Activated CD4-positive, alpha-beta T cell treated with anti-CD3 and anti-CD28 coated beads, Interleukin-2, amount 10 ng/mL, durations not matched to agents 7 days and 5 days (primary cell): ENCODE measurements at regions of chr1 and their contacts with region 1.

Region 1: GRCh38 chr1:153946622-153947241 is at the start of gene DENND4B:
- DNase-seq: peak; percentile 70
- H3K4me3 Mint-ChIP-seq: peak within 1 kb of the TSS; percentile 95
- H3K27ac Mint-ChIP-seq: peak within 1 kb of the TSS; percentile 97
- H3K4me1 Mint-ChIP-seq: peaks cover 29% of the 10 kb centered on the region
- H3K27me3 Mint-ChIP-seq: no peaks in the 10 kb centered on the region
- total RNA-seq, gene DENND4B: 165 to 180 TPM

Region 2: GRCh38 chr1:153805042-153805745 is 141.5 kb before region 1 on chr1:
- CTCF ChIA-PET with region 1: interaction called, 12 read pairs
- POLR2A ChIA-PET with region 1: no interaction called
- DNase-seq: peak; percentile 83
- H3K4me3 Mint-ChIP-seq: peak overlapping the region; percentile 14
- H3K27ac Mint-ChIP-seq: peak overlapping the region; percentile 77
- H3K4me1 Mint-ChIP-seq: peaks cover 39% of the 10 kb centered on the region
- H3K27me3 Mint-ChIP-seq: no peaks in the 10 kb centered on the region

Region 3: DNA sequence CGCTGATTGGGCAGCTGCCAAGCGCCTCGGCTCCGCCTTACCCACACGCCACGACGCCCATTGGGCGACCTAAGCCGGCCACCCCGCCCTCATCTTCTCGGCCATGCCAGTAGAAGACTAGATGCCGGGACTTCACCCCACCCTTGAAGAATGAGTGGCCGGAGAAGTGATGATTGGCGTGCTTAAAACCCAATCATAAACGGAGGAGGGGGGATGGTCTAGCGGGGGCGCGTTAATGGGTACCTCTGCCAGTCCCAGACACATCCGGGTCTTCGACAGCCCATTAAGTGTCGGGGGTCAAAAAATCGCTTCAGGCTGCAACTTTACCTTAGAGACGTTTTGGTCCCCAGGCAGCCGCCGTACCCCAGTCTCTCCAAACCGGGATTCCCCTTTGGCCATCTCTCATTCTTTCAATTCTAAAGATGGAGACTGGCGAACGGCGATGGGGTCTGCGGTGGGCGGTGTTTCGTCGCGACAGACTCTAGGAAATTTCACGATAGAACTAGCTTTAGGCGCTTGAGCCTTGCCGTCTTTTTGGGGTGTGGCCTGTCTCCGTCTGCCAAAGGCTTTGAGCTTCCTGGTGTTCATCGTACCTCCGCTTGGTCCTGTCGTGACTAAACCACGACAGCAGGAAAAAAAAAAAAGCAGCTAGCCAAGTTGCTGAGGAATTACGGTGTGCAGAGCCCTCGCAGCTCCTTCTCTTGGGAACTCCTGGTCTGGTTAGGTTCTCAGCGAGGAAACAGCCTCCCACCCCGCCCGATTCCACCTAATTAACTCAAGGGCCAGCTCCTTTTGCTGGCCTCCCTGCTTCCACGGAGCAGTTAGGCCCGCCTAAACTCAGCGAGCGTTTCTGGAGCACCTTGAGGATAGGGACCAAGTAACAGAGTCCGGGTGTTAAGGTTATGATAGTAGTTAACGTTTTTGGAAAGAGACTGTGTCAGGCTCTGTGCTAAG is 23.5 kb before region 1 on chr1 and contains the start of gene GATAD2B:
- CTCF ChIA-PET with region 1: interaction called, 21 read pairs
- POLR2A ChIA-PET with region 1: interaction called, 3 read pairs
- DNase-seq: peak; percentile 100
- H3K4me3 Mint-ChIP-seq: peak within 1 kb of the TSS; percentile 95
- H3K27ac Mint-ChIP-seq: peak within 1 kb of the TSS; percentile 95
- H3K4me1 Mint-ChIP-seq: peaks cover 42% of the 10 kb centered on the region
- H3K27me3 Mint-ChIP-seq: no peaks in the 10 kb centered on the region
- total RNA-seq, gene GATAD2B: 73.4 to 75.4 TPM

Region 4: GRCh38 chr1:153928791-153929341 is 17.9 kb before region 1 on chr1:
- CTCF ChIA-PET with region 1: interaction called, 21 read pairs
- POLR2A ChIA-PET with region 1: interaction called, 3 read pairs
- DNase-seq: no peak
- H3K4me3 Mint-ChIP-seq: no peak overlapping the region
- H3K27ac Mint-ChIP-seq: peak overlapping the region; percentile 60
- H3K4me1 Mint-ChIP-seq: peaks cover 17% of the 10 kb centered on the region
- H3K27me3 Mint-ChIP-seq: no peaks in the 10 kb centered on the region

Region 5: GRCh38 chr1:153958111-153958960 is 11.6 kb after region 1 on chr1 and contains the start of gene CRTC2:
- CTCF ChIA-PET with region 1: interaction called, 38 read pairs
- POLR2A ChIA-PET with region 1: interaction called, 6 read pairs
- DNase-seq: peak; percentile 99
- H3K4me3 Mint-ChIP-seq: peak within 1 kb of the TSS; percentile 96
- H3K27ac Mint-ChIP-seq: peak within 1 kb of the TSS; percentile 92
- H3K4me1 Mint-ChIP-seq: peaks cover 66% of the 10 kb centered on the region
- H3K27me3 Mint-ChIP-seq: no peaks in the 10 kb centered on the region
- total RNA-seq, gene CRTC2: 80.7 to 107 TPM

Region 6: DNA sequence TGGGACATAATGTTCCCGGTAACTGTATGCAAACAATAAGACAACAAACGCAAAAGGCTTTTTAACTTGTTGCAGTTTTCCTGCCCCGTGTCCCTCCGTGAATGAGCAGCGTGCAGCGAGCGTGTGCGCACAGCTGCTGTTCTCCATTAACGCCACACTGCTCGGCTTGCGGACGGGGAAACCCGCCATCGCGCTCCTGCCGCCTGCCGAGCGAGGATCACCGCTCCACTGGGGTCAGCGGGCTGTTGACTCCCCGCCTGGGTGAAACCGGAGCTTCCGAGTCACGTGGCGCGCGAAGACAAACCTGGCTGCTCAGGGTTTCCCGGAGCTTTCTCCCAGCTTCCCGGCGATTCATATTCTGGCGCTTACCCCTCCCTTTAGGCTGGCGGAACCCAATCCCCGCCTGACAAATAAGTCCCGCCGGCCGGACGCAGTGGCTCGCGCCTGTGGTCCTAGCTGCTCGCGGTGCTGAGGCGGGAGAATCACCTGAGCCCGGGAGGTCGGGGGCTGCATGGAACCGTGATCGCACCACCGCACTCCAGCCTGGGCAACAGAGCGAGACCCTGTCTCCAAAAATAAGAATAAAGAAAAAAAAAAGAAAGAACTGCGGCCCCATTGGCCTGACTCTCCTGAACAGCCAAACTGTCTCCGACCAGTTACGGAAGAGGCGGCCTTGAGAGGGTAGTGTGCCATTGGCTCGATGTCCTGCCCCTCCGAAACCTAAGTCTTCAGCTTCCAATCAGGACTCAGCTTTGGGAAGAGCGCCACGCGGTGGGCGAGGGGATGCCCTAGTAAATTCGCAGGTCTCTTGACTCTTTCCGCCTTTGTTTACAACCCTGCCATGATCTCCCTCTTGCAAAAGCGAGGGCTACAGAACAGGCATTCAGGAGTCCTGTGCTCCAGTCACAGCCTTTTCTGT is 20.6 kb after region 1 on chr1 and contains the start of gene CREB3L4:
- CTCF ChIA-PET with region 1: interaction called, 25 read pairs
- POLR2A ChIA-PET with region 1: interaction called, 6 read pairs
- DNase-seq: peak; percentile 90
- H3K4me3 Mint-ChIP-seq: peak within 1 kb of the TSS; percentile 88
- H3K27ac Mint-ChIP-seq: peak within 1 kb of the TSS; percentile 95
- H3K4me1 Mint-ChIP-seq: peaks cover 62% of the 10 kb centered on the region
- H3K27me3 Mint-ChIP-seq: no peaks in the 10 kb centered on the region
- total RNA-seq, gene CREB3L4: 6.9 to 7.9 TPM

Region 7: GRCh38 chr1:153977250-153978240 is 30.8 kb after region 1 on chr1 and contains the start of gene JTB:
- CTCF ChIA-PET with region 1: interaction called, 14 read pairs
- POLR2A ChIA-PET with region 1: no interaction called
- DNase-seq: peak; percentile 90
- H3K4me3 Mint-ChIP-seq: peak within 1 kb of the TSS; percentile 97
- H3K27ac Mint-ChIP-seq: peak within 1 kb of the TSS; percentile 92
- H3K4me1 Mint-ChIP-seq: peaks cover 47% of the 10 kb centered on the region
- H3K27me3 Mint-ChIP-seq: no peaks in the 10 kb centered on the region
- total RNA-seq, gene JTB: 111 to 124 TPM